GM18951 (cell line): ENCODE measurements at regions of chr22 and their contacts with region 1.

Region 1: DNA sequence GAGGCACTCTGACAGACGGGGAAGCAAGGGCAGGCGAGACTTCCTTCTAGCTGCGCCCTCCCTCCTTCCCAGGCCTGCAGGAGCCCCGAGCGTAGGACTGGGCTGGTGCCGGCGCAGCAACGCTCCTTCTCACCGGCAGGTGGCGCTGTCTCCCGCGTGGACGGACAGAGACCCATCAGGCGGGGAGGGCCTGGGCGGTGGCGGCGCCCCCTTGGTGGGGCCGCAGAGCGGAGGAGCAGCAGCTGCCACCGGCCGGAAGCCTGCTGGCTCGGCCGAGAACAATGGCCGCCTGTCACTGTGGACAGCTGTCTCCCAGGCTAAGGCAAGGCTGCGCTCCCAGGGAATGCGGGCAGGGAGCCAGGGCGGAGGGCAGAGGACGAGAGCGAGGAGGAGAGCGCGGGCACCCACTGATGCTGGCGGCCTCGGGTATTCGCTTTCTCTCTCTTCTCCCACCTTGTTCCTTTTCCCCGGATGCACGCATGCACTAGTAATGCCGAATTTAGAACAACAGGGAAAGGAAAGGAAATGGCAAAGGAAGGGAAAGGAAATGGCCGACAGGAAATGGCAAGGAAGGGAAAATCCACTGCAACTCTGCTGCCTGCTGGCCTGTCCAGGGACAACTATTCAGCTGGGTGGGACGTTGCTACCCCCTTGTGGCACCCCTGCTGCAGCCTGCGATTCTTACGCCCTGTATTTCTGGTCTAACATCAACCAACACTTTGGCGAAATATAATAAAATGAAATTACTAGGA is 14.4 kb downstream of the PPM1F start:
- POLR2A ChIP-seq: peak; percentile 56

Region 2: GRCh38 chr22:21707677-21708076 is 230.6 kb before region 1 on chr22:
- in situ Hi-C with region 1: loop called (anchors 10 kb)
- POLR2A ChIP-seq: no peak

Region 3: GRCh38 chr22:21726650-21727049 is 211.6 kb before region 1 on chr22:
- in situ Hi-C with region 1: loop called (anchors 10 kb)
- POLR2A ChIP-seq: no peak